ENCODE measurements at regions of chr14 and their contacts with region 1.

Region 1: DNA sequence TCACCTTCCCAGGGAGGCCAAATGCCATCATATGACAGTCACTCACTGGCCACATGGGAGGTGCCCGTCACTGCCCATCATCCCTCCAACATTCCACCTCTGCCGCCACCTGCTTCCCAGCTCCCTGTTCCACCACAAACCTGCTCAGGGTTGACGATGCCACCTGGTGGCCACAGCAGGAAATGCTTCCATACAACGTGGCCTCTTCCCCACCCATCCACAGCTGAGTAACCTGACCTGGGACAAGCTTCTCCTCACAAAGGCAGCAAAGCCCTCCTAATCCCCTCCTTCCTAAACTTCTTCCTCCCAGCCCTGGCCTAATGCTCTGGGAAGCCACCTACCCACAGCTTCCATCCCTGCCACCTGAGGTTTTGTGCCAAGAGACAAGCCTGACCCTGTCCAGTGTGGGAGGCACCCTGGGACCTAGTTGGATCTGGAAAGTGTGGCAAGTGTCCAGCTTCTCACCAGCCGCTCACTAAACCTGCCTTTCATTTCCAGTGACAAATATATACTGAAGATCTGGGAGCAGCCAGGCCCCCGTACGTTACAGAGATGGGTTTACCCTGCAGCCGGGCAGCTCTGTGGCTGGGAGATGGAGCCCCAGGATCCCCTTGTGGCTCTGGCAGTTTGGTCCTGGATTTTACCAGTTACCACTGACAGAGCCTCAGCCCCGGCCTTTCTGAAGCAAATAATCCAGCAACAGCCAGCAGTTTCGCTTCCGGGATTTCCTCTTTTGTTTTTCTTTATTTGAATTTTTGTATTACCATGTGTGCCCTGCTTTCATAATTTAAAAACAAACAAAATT is 4.2 kb downstream of the DEGS2 start:
- DNase-seq: peak; percentile 62 to 70
- ATAC-seq: peak in 1 of 2 experiments; percentile 60; a peak in 3 of 6 replicates
- H3K4me3 ChIP-seq: no peak overlapping the region
- H3K27ac ChIP-seq: peak overlapping the region; percentile 40 to 52; a peak in 3 of 6 replicates
- H3K4me1 ChIP-seq: peaks cover 20% of the 10 kb centered on the region
- CTCF ChIP-seq: peak; percentile 31
- EP300 ChIP-seq: no peak
- POLR2A ChIP-seq: no peak
- RAD21 ChIP-seq: peak; percentile 11 to 38; a peak in 1 of 5 replicates

Region 2: DNA sequence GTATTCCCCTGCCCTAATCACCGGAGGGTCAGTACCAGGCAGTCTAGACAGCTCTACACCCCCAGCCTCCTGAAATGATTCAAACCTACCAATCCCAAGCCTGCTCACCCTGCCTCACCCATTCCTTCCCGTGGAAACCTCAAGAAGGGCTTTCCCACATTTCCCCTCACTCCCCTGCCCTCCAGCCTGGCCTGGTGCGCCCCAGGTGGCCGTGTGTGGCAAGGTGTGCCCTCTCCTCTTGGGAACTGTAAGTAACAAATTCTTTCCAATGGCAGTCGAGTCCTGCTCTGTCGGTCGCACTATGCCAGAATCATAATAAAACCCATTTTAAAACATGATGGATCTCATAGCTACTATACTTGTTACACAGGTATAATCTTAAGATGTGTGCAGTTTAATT is 18.1 kb after region 1 on chr14:
- CTCF ChIA-PET with region 1: interaction called, 13 read pairs
- POLR2A ChIA-PET with region 1: no interaction called
- DNase-seq: no peak
- ATAC-seq: peak in 1 of 2 experiments; percentile 57; a peak in 3 of 6 replicates
- H3K4me3 ChIP-seq: no peak overlapping the region
- H3K27ac ChIP-seq: no peak overlapping the region
- H3K4me1 ChIP-seq: no peaks in the 10 kb centered on the region
- CTCF ChIP-seq: no peak
- EP300 ChIP-seq: no peak
- POLR2A ChIP-seq: no peak
- RAD21 ChIP-seq: no peak

Measured in A549 (cell line).